ENCODE measurements at regions of chr16 and their contacts with region 1.

Region 1: DNA sequence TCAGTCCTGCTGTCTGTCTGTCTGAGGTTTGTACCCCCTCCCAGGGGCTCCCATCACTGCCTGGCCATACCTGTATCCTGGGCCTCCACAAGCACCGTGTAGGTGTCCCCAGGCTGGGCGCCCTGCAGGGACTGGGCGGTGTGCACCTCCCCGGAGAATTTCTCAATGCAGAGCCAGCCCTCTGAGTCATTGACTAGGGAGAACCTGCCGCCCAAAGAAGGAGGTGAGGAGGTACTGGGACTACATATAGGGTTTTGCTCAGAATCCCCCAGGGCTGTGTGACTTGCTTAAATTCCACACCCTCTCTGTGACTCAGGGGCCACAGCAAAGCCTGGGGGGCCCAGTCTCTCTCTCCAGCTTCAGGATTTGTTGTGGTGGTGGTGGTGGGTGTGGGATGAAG is 7.6 kb downstream of the CDH16 start:
- DNase-seq: no peak
- ATAC-seq: no peak
- H3K4me3 Mint-ChIP-seq: no peak overlapping the region
- H3K27ac Mint-ChIP-seq: no peak overlapping the region
- H3K4me1 Mint-ChIP-seq: no peaks in the 10 kb centered on the region
- H3K27me3 Mint-ChIP-seq: peaks cover 13% of the 10 kb centered on the region
- CTCF ChIP-seq: no peak

Region 2: GRCh38 chr16:66880288-66881013 is 30.7 kb before region 1 on chr16 and contains the start of gene PDP2:
- CTCF ChIA-PET with region 1: interaction called, 22 read pairs
- POLR2A ChIA-PET with region 1: interaction called, 3 read pairs
- DNase-seq: peak; percentile 97
- ATAC-seq: peak; percentile 99
- H3K4me3 Mint-ChIP-seq: peak within 1 kb of the TSS; percentile 95
- H3K27ac Mint-ChIP-seq: peak within 1 kb of the TSS; percentile 93
- H3K4me1 Mint-ChIP-seq: peaks cover 9% of the 10 kb centered on the region
- H3K27me3 Mint-ChIP-seq: peaks cover 11% of the 10 kb centered on the region
- CTCF ChIP-seq: no peak
- total RNA-seq, gene PDP2: 26.4 to 28.4 TPM (median 27.0 TPM) in 3 replicates

Region 3: GRCh38 chr16:66899945-66900710 is 11.0 kb before region 1 on chr16:
- CTCF ChIA-PET with region 1: interaction called, 32 read pairs
- POLR2A ChIA-PET with region 1: no interaction called
- DNase-seq: no peak
- ATAC-seq: peak; percentile 41
- H3K4me3 Mint-ChIP-seq: no peak overlapping the region
- H3K27ac Mint-ChIP-seq: no peak overlapping the region
- H3K4me1 Mint-ChIP-seq: peaks cover 8% of the 10 kb centered on the region
- H3K27me3 Mint-ChIP-seq: no peaks in the 10 kb centered on the region; the same call in 1 of the 2 replicates
- CTCF ChIP-seq: no peak

Region 4: GRCh38 chr16:66988197-66988788 is 77.2 kb after region 1 on chr16 and contains the start of gene CES4A:
- CTCF ChIA-PET with region 1: no interaction called
- POLR2A ChIA-PET with region 1: no interaction called
- DNase-seq: no peak
- ATAC-seq: no peak
- H3K4me3 Mint-ChIP-seq: no peak within 1 kb of the TSS
- H3K27ac Mint-ChIP-seq: no peak within 1 kb of the TSS
- H3K4me1 Mint-ChIP-seq: no peaks in the 10 kb centered on the region
- H3K27me3 Mint-ChIP-seq: peaks cover 12% of the 10 kb centered on the region
- CTCF ChIP-seq: no peak
- total RNA-seq, gene CES4A: 0.57 to 0.89 TPM (median 0.61 TPM) in 3 replicates

Measured in WTC11 (cell line).